Activated CD4-positive, alpha-beta T cell treated with anti-CD3 and anti-CD28 coated beads for 36 hours (primary cell): ENCODE measurements at regions of chr10 and their contacts with region 1.

Region 1: DNA sequence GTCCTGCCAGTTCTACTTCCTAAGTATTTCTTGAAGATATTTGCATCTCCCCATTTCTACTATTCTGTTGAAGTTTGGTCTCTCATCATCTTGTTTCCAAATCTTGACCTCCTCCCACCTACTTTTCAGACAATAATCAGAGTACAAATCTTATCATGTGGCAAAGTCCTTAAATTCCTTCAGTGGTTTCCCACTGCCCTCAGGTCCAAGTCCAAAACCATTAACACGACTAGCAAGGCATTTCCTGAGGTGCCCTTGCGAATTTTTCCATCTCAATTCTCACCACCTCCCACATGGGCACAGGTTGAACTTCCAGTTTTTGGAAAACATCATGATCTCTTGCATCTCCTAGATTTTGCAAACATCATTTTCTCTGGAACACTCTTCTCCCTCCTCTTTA is 97.2 kb upstream of the CDK1 start:
- DNase-seq: no peak
- ATAC-seq: no peak
- H3K4me3 Mint-ChIP-seq: no peak overlapping the region
- H3K27ac Mint-ChIP-seq: no peak overlapping the region
- H3K4me1 Mint-ChIP-seq: peaks cover 17% of the 10 kb centered on the region
- H3K27me3 Mint-ChIP-seq: no peaks in the 10 kb centered on the region

Region 2: DNA sequence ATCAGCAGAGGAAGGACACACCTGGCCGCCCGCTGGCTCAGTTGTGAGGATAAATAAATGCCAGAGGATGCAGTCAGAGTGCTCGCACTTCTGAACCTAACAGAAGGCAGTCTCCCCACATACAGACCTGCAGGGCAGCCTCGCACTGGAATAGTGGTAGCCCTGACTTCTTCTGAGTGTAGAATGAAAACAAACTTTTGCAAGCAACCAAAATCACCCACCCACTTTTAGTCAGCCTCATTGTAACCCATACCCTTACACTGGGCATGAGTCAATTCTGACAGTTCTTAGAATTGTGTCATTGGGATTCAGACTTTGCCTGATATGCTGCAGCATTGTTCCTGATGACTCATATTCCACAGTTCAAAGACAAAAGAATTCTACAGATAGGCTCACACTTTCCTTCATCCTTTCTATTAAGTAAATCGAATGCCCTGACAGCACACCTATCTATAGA is 69.8 kb before region 1 on chr10:
- CTCF ChIA-PET with region 1: no interaction called
- POLR2A ChIA-PET with region 1: no interaction called
- intact Hi-C with region 1: no loop called
- DNase-seq: peak; percentile 55
- ATAC-seq: peak; percentile 93
- H3K4me3 Mint-ChIP-seq: peak overlapping the region; percentile 26
- H3K27ac Mint-ChIP-seq: peak overlapping the region; percentile 66
- H3K4me1 Mint-ChIP-seq: peaks cover 35% of the 10 kb centered on the region
- H3K27me3 Mint-ChIP-seq: no peaks in the 10 kb centered on the region

Region 3: DNA sequence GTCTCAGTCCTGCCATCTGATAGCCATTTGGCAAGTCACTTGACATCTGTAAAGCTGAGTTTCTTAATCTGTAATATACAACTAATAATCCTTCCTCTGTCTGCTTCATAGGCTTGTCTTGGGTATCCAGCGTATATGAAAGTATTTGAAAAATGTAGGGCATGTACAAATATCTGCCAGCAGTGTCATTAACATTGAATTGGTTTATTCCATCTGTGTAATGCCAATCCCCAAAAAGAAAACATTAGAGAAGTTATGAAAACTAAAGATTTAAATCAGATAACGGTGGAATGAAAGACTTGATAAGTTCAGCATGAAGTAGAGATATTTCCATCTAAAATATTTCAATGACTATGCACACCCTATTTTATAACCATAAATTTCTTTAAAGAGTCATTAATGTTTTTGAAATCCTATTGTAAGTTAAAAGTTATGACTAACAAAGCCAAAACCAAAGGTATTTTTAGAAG is 1597.4 kb after region 1 on chr10:
- CTCF ChIA-PET with region 1: no interaction called
- POLR2A ChIA-PET with region 1: no interaction called
- intact Hi-C with region 1: loop called in 1 of 2 experiments (anchors 5 kb)
- DNase-seq: no peak
- ATAC-seq: no peak
- H3K4me3 Mint-ChIP-seq: no peak overlapping the region
- H3K27ac Mint-ChIP-seq: no peak overlapping the region
- H3K4me1 Mint-ChIP-seq: no peaks in the 10 kb centered on the region
- H3K27me3 Mint-ChIP-seq: no peaks in the 10 kb centered on the region

Region 4: DNA sequence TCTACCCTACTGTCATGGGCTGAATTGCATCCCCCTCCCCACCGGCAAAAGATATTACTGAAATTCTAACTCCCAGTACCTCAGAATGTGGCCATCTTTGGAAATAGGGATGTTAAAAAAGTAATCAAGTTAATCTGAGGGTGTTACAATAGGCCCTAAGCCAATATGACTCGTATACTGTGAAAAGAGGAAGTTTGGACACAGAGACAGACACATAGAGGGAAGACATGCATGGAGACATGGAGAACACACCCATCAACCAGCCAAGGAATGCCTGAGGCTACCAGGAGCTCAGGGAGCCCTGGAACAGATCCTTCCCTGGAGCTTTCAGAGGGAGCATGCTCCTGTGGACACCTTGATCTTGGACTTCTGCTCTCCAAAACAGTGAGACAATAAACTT is 1985.2 kb after region 1 on chr10:
- CTCF ChIA-PET with region 1: no interaction called
- POLR2A ChIA-PET with region 1: no interaction called
- intact Hi-C with region 1: loop called in 1 of 2 experiments (anchors 10 kb)
- DNase-seq: no peak
- ATAC-seq: no peak
- H3K4me3 Mint-ChIP-seq: no peak overlapping the region
- H3K27ac Mint-ChIP-seq: no peak overlapping the region
- H3K4me1 Mint-ChIP-seq: no peaks in the 10 kb centered on the region
- H3K27me3 Mint-ChIP-seq: no peaks in the 10 kb centered on the region